Vagina (tissue), 2 donors: ENCODE measurements at regions of chr1 and their contacts with region 1.

Region 1: DNA sequence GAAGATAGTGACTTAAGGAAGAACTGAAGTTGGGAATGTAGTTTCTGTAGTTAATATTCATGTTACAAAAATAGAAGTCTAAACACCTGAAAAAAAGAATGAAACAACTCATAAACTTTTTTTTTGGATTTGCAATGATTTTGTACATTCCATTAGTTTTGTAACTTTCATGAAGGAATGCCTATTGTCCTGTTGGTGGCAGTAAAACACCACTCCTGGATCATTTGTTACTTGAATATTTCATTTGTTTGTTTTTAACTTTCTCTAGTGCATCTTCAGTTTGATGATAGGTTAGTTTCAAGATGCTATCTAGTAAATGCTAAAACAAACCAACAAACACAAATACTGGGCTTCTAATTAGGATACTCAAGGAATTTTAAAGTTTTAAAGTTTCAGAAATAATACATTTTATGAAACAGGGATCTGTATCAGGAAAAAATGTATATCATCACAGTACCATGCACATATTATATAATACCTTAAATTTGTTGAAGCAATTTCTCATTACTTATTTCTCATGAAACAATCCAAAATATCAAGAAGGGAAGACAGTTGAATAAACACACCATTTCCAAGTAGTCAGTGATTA is 229.7 kb upstream of the CACYBP start:
- DNase-seq: no peak
- H3K4me3 ChIP-seq: no peak overlapping the region
- H3K27ac ChIP-seq: no peak overlapping the region
- H3K4me1 ChIP-seq: no peaks in the 10 kb centered on the region
- H3K27me3 ChIP-seq: no peaks in the 10 kb centered on the region
- CTCF ChIP-seq: peak; percentile 47 to 60 (median 59)
- POLR2A ChIP-seq: no peak

Region 2: DNA sequence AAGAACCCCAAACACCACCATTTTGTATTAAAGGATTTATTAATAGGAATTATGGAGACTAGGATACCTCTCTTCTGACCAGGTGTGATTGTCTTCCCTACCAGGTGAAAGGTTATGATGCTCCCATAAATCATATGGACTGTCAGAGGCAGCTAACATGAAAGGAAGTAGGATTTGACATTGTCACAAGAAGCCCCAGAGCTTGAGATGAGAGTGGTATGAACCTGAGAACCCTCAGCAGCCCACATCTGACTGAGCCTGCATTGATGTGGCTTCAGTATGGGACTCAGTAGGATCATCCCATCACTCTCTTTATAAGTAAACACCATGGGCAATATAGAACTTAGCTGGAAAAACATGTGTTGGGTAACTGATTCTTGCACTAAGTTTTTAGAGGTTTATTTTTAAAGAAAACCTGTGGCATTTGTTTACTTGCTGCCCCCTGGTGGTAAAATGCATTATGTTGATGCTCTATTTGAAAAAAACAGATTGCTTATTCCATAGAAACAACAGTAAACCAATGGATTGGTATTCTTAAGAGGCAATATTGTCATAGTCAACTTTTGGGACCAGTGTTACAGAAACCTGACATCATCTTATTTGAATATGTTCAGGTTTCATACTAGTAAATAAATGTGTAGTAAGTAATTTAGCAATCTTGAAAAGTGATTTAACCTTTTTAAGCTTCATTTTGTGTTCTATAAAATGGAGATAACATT is 213.1 kb after region 1 on chr1:
- intact Hi-C with region 1: loop called (anchors 10 kb)
- DNase-seq: no peak
- H3K4me3 ChIP-seq: no peak overlapping the region
- H3K27ac ChIP-seq: no peak overlapping the region
- H3K4me1 ChIP-seq: no peaks in the 10 kb centered on the region
- H3K27me3 ChIP-seq: no peaks in the 10 kb centered on the region
- CTCF ChIP-seq: peak; percentile 30 to 64 (median 62)
- POLR2A ChIP-seq: no peak